ENCODE measurements at regions of chr18 and their contacts with region 1.

Region 1: DNA sequence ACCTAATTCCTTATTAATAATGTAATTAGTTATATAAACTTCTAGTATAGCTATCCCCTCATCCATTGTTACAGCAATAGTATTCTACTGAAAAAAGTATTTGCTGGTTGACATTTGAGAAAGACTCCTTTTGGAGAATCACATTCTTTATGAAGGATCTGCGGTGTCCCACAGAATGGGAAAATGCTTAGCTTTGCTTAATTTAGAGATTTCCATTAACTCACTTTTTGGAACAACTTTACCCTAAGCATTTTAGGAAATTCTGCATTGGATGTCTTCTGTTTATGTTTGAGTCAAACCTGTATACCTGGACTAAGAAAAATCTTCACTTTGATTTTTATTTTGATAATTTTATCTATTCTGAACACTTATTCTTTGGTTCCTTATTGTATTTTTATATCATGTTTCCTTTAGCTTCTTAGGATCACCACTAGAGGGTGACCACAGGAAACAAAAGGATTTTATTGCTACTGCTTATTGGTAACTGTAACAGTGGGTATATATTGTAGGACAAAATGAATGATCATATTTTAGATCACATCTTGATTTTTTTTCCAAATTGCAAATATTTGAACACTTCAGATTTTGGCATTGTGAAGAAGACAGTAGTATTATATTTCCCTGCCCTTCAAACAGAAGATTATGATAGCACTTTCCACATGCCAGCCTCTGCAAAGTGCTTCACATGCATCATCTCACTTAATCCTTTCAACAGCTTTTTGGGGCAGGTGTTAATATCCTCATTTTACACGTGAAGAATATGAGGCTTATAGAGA is 79.6 kb downstream of the MIB1 start:
- DNase-seq: no peak
- H3K4me3 ChIP-seq: no peak overlapping the region
- H3K27me3 ChIP-seq: no peaks in the 10 kb centered on the region
- CTCF ChIP-seq: peak; percentile 59

Region 2: GRCh38 chr18:21831413-21831831 is 11.2 kb after region 1 on chr18:
- CTCF ChIA-PET with region 1: interaction called, 17 read pairs
- POLR2A ChIA-PET with region 1: no interaction called
- DNase-seq: no peak
- H3K4me3 ChIP-seq: no peak overlapping the region
- H3K27me3 ChIP-seq: no peaks in the 10 kb centered on the region
- CTCF ChIP-seq: no peak